IMR-90 (cell line): ENCODE measurements at regions of chr4 and their contacts with region 1.

Region 1: DNA sequence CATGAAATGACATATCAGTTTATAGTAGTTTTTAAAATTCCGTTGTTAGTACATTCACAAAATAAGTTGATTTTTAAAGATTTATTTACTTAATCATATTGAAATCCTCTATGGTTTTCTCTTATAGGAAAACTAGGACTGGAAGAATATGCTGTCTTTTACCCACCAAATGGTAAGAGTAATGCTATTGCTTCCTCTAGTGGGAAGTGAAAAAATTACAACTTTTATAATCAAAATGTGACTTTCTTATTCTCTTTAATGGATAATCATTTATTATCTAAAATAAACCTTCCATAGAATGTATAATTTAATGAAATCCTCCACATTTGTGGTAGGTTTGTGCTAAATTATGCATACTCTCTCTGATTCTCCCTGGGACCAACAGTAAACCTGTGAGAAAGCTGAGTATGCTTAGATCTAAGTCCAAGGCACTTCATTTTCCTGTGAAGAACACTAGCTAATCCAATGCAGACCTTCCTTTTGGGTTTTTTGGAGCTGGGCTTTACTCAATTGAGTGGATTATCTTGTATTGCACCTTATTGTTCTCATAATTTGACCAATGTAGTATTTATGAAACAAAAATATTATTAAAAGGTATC is 136.2 kb downstream of the TBC1D19 start:
- DNase-seq: peak; percentile 63
- ATAC-seq: peak; percentile 60
- H3K4me3 ChIP-seq: no peak overlapping the region
- H3K27ac ChIP-seq: no peak overlapping the region
- H3K4me1 ChIP-seq: peaks cover 3% of the 10 kb centered on the region; the same call in 1 of the 2 replicates
- H3K27me3 ChIP-seq: no peaks in the 10 kb centered on the region
- CTCF ChIP-seq: peak; percentile 93
- POLR2A ChIP-seq: 0 out of 2 replicates have a peak, but pooled peaks have one; percentile 30
- RAD21 ChIP-seq: peak; percentile 92

Region 2: DNA sequence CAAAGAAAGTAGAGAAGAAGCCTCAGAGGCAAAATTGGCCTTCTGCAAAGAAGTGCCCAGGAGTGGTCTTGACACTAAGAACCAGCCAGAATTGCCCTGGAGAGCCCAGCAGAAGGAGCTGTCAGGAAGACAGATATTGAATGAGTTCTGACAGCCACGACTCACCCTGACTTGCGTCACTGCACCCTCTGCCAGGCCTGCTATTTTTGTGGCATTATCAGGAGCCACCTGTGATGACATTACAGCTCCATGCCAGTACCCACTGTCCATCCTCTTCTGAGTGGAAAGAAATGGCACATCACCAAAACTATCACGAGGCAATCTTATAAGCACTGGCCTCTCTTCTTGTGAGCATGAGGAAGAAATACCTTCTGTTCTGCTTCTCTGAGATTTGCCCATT is 738.3 kb before region 1 on chr4:
- CTCF ChIA-PET with region 1: no interaction called
- POLR2A ChIA-PET with region 1: no interaction called
- dilution Hi-C with region 1: no loop called
- in situ Hi-C with region 1: loop called (anchors 10 kb)
- intact Hi-C with region 1: loop called (anchors 5 kb)
- DNase-seq: no peak
- ATAC-seq: no peak
- H3K4me3 ChIP-seq: no peak overlapping the region
- H3K27ac ChIP-seq: no peak overlapping the region
- H3K4me1 ChIP-seq: 0 out of 2 replicates have a peak, but pooled peaks cover 2% of the 10 kb centered on the region
- H3K27me3 ChIP-seq: peaks cover 2% of the 10 kb centered on the region; the same call in 1 of the 2 replicates
- CTCF ChIP-seq: no peak
- POLR2A ChIP-seq: no peak
- RAD21 ChIP-seq: no peak

Region 3: DNA sequence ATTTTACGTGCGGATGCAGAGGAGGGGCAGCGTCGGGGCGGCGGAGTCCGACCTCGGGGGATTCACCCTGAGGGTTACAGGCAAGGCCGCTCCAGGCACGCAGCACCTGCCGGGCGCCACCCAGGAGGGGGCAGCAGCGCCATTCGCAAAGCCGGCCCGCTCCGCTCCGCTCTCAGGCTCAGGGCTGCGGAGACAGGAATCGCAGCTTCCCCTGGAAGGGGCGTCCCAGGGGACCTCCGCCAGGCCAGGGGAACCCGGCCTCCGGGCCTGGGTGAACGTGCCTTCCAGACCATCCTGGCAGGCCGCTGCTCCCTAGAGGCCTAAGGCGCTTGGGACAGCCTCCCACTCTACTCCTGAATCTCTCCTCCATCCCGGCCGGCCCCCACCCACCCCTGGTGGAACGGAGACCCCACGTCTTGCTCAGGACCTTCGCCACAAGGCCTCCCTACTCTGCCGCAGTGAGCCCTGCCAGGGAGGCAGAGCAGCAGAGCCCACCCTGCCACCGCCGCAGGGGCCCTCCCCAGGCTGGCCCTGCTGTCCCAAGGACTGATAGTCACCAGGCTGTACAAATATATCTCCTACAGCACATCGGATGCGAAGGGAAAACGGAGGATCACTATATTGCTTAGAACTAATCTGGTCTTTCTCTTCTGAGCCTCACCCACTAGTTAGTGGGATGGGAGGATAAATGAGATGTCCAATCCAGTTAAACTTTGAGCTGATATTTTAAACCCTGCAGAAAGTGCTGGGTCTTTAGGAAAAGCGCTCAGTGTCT is 691.1 kb before region 1 on chr4:
- CTCF ChIA-PET with region 1: no interaction called
- POLR2A ChIA-PET with region 1: no interaction called
- dilution Hi-C with region 1: no loop called
- in situ Hi-C with region 1: no loop called
- intact Hi-C with region 1: loop called (anchors 10 kb)
- DNase-seq: peak; percentile 58
- ATAC-seq: peak; percentile 79
- H3K4me3 ChIP-seq: no peak overlapping the region
- H3K27ac ChIP-seq: no peak overlapping the region
- H3K4me1 ChIP-seq: peaks cover 19% of the 10 kb centered on the region
- H3K27me3 ChIP-seq: peaks cover 3% of the 10 kb centered on the region
- CTCF ChIP-seq: peak; percentile 77
- POLR2A ChIP-seq: no peak
- RAD21 ChIP-seq: peak; percentile 93

Region 4: DNA sequence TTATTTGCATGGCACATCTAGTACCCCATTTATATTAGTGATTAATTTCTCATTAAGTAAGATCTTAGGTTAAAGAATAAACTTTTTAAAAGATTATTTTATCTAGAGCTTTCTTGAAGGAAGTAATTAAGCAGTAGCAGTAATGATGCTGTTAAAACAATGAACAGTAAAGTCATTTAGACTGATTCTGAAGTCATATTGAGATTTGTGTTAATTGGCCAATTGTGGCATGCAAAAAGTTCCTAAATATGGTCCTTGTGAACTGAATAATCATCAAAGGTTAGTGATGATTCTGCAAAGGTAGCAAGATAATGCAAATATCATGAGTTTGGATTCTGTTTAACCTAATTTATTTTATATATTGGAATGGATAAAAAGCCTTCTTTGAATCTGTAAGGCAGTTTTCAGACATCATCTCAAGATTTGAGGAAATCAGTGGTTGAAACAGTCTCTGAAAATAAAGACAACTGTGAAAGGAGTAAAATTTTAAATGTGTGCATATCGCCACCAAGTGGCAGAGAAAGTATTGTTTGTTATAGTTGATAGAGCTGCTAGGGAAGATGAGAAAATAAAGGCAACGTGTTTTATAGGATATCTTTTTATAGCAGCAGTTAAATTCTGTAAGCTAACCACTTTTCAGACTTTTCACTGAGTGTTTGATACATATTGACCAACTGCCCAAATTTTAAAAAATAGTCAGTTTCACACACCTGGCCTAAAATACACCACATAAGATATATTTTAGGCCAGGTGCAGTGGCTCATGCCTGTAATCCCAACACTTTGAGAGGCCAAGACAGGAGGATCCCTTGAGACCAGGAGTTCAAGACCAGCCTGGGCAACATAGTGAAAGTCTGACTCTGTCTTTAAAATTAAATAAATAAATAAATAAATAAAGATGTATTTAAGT is 309.4 kb before region 1 on chr4:
- CTCF ChIA-PET with region 1: no interaction called
- POLR2A ChIA-PET with region 1: no interaction called
- dilution Hi-C with region 1: no loop called
- in situ Hi-C with region 1: no loop called
- intact Hi-C with region 1: loop called (anchors 5 kb)
- DNase-seq: peak; percentile 63
- ATAC-seq: peak; percentile 68
- H3K4me3 ChIP-seq: no peak overlapping the region
- H3K27ac ChIP-seq: no peak overlapping the region
- H3K4me1 ChIP-seq: peaks cover 10% of the 10 kb centered on the region
- H3K27me3 ChIP-seq: no peaks in the 10 kb centered on the region
- CTCF ChIP-seq: peak; percentile 75
- POLR2A ChIP-seq: no peak
- RAD21 ChIP-seq: peak; percentile 69

Region 5: GRCh38 chr4:26431461-26432180 is 288.4 kb before region 1 on chr4:
- CTCF ChIA-PET with region 1: no interaction called
- POLR2A ChIA-PET with region 1: no interaction called
- dilution Hi-C with region 1: no loop called
- in situ Hi-C with region 1: loop called (anchors 10 kb)
- intact Hi-C with region 1: loop called (anchors 1 kb)
- DNase-seq: peak; percentile 55
- ATAC-seq: no peak
- H3K4me3 ChIP-seq: no peak overlapping the region
- H3K27ac ChIP-seq: no peak overlapping the region
- H3K4me1 ChIP-seq: peaks cover 5% of the 10 kb centered on the region
- H3K27me3 ChIP-seq: no peaks in the 10 kb centered on the region
- CTCF ChIP-seq: no peak
- POLR2A ChIP-seq: no peak
- RAD21 ChIP-seq: no peak

Region 6: DNA sequence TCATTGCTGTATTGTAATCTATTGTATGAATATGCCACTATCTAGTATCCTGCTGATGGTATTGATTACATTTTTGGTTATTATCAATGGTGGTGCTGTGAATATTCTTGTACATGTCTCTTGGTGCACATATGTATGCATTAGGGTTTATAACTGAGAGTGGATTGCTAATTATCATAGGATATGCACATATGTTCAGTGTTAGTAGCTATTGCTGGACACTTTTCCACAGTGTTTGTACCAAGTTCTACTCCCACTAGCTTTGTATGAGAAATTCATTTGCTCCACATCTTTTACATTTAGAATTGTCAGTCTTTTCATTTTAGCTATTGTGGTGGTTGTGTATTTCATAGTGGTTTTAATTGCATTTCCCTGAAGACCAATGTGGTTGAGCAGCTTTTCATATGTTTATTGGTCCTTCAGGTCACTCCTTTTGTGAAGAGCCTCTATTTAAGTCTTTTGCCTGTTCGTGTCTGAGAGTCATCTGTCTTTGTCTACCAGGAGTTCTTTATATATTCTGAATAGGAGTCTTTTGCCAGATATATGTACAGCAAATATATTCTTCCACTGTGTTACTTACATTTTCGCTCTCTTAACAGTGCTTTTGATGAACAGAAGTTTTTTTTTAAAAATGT is 49.0 kb before region 1 on chr4:
- CTCF ChIA-PET with region 1: no interaction called
- POLR2A ChIA-PET with region 1: no interaction called
- dilution Hi-C with region 1: no loop called
- in situ Hi-C with region 1: no loop called
- intact Hi-C with region 1: no loop called
- DNase-seq: no peak
- ATAC-seq: no peak
- H3K4me3 ChIP-seq: no peak overlapping the region
- H3K27ac ChIP-seq: no peak overlapping the region
- H3K4me1 ChIP-seq: no peaks in the 10 kb centered on the region
- H3K27me3 ChIP-seq: no peaks in the 10 kb centered on the region
- CTCF ChIP-seq: no peak
- POLR2A ChIP-seq: no peak
- RAD21 ChIP-seq: no peak

Region 7: DNA sequence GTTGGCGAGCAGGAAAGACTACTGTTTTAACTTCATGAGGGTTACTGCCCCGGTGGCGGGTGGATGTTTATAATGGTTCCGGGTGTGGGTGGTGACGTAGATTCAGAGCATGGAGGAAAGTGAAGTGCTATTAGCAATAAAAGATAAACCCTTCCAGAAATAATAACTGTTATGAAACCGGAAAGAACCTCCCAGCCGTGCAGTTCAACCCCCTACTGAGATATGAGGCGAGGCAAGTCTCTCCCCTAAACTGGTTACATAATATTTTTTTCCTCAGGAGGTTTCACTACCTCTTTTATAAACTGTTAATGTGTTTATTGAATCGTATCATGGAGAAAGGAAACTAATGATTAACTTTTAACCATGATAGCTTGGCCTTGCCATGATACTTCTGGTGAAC is 106.7 kb after region 1 on chr4:
- CTCF ChIA-PET with region 1: no interaction called
- POLR2A ChIA-PET with region 1: no interaction called
- dilution Hi-C with region 1: no loop called
- in situ Hi-C with region 1: no loop called
- intact Hi-C with region 1: no loop called
- DNase-seq: peak; percentile 59
- ATAC-seq: peak; percentile 62
- H3K4me3 ChIP-seq: no peak overlapping the region
- H3K27ac ChIP-seq: no peak overlapping the region
- H3K4me1 ChIP-seq: no peaks in the 10 kb centered on the region
- H3K27me3 ChIP-seq: no peaks in the 10 kb centered on the region
- CTCF ChIP-seq: no peak
- POLR2A ChIP-seq: no peak
- RAD21 ChIP-seq: no peak